OCI-LY7 (cell line): ENCODE measurements at regions of chr11 and their contacts with region 1.

Region 1: DNA sequence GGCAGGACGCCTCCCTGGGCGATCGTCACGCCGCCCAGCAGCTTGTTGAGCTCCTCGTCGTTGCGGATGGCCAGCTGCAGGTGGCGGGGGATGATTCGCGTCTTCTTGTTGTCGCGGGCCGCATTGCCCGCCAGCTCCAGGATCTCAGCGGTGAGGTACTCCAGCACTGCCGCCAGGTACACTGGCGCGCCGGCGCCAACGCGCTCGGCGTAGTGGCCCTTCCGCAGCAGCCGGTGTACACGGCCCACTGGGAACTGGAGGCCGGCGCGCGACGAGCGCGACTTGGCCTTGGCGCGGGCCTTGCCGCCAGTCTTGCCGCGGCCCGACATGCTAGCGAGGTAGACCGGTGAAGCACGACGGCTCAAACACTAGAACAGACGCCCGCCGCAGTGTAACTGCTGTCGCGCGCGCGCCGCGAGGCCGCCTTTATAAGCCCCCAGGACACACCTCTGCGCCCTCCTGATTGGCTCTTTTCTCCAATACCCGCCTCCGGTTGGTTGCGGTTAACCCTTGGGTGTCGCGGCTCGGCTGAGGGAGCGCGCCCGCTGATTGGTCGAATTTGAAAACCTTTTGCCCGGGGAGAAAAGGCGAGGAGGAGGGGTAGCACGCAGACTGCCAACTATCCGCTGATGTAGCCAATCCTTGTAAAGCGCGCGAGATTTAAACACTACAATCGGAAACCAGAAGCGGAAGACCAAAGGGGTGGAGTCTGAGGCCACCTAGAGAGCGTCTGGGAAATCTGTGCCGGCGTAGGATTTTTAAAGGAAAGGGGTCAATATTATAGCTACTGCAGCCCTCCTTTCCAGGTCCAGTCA is 6.4 kb downstream of the DPAGT1 start:
- DNase-seq: peak; percentile 99
- H3K4me3 ChIP-seq: peak overlapping the region; percentile 81
- H3K27ac ChIP-seq: peak overlapping the region; percentile 79
- H3K4me1 ChIP-seq: peaks cover 67% of the 10 kb centered on the region
- CTCF ChIP-seq: 0 out of 2 replicates have a peak, but pooled peaks have one; percentile 22

Region 2: DNA sequence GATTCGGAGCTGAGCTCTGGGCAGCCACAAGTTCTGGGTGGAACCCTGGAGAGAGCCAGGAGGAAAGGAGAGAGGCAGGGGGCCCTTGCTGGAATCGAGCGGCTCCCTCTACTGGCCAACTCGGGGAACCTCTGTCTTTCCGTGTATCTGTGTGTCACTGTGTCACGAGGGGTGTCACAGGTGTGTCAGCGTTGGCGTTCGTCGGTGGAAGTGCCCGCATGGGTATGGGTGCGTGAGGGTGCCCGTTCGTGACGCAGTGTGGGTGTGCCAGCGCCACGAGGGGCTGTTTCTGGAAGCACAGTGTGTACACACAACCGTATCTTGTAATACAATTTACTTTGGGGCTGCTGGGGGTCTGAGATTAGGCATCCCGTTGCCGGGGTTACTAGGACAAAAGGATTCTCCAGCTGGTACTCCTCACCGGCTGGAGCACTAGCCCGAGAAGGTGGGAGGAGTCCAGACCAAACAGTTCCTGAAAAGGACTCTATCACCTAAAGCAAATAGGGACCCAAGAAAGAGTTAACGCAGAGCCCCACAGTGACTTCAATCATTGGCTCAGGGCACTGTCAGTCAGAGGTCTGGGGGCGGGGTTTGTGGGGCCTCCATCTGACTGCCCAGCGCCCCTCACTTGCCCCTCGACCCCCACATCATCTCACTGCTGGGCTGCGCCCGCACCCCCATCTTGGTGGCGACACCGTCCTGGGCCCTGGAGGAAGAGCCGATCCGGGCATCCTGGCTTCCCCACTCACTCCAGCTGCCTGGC is 167.0 kb before region 1 on chr11:
- CTCF ChIA-PET with region 1: no interaction called
- POLR2A ChIA-PET with region 1: no interaction called
- intact Hi-C with region 1: loop called (anchors 2 kb)
- DNase-seq: peak; percentile 91
- H3K4me3 ChIP-seq: peak overlapping the region; percentile 71
- H3K27ac ChIP-seq: peak overlapping the region; percentile 76
- H3K4me1 ChIP-seq: peaks cover 44% of the 10 kb centered on the region
- CTCF ChIP-seq: peak; percentile 96

Region 3: GRCh38 chr11:119018074-119018938 is 77.0 kb before region 1 on chr11 and contains the starts of genes RPS25 and TRAPPC4:
- CTCF ChIA-PET with region 1: no interaction called
- POLR2A ChIA-PET with region 1: interaction called, 5 read pairs
- intact Hi-C with region 1: loop called (anchors 2 kb)
- DNase-seq: peak; percentile 97
- H3K4me3 ChIP-seq: peak within 1 kb of the TSS; percentile 81
- H3K27ac ChIP-seq: peak within 1 kb of the TSS; percentile 90
- H3K4me1 ChIP-seq: peaks cover 29% of the 10 kb centered on the region
- CTCF ChIP-seq: no peak
- total RNA-seq, gene RPS25: 1,395 and 1,541 TPM in 2 replicates
- total RNA-seq, gene TRAPPC4: 49.3 and 64.3 TPM in 2 replicates

Region 4: DNA sequence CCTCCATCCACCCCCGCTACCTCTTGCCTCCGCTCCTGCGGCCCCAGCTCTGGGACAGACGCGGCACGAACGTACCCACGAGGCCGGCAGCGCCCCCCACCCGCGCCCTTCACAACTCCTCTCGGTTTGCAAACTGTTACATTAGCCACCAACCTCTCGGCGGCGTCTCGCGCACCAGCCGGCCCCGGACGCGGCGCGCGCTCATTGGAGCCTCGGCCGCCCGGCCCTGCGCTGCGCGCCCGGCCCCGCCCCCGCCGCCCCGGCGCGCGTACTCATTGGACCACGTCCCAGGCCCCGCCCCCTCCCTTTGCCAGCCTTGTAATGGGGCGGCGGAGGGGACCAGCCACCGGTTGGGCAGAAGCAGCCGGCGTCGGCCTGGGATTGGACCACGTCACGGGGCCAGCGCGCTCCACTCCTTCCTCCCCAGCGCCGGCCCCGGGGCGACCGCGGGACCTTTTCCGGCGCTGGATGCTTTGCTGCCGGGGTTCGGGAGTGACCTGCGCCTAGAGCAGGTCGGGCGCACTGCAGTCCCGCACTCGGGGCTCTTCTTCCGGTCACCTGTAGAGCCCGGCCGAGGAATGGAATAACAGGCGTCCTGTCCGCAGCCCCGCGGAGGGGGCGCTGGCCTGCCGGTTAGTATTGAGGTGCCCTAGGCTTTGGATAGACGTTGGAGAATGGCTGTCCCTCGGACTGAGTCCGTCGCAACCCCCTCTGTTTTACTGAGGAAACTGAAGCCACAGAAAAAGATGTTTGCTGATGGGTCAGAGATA is 38.1 kb before region 1 on chr11 and contains the start of gene HYOU1:
- CTCF ChIA-PET with region 1: interaction called, 3 read pairs
- POLR2A ChIA-PET with region 1: interaction called, 6 read pairs
- intact Hi-C with region 1: loop called (anchors 1 kb)
- DNase-seq: peak; percentile 99
- H3K4me3 ChIP-seq: peak within 1 kb of the TSS; percentile 82
- H3K27ac ChIP-seq: peak within 1 kb of the TSS; percentile 65
- H3K4me1 ChIP-seq: peaks cover 13% of the 10 kb centered on the region
- CTCF ChIP-seq: peak; percentile 50; the same call in 1 of the 2 replicates
- total RNA-seq, gene HYOU1: 86.6 and 97.6 TPM in 2 replicates

Region 5: DNA sequence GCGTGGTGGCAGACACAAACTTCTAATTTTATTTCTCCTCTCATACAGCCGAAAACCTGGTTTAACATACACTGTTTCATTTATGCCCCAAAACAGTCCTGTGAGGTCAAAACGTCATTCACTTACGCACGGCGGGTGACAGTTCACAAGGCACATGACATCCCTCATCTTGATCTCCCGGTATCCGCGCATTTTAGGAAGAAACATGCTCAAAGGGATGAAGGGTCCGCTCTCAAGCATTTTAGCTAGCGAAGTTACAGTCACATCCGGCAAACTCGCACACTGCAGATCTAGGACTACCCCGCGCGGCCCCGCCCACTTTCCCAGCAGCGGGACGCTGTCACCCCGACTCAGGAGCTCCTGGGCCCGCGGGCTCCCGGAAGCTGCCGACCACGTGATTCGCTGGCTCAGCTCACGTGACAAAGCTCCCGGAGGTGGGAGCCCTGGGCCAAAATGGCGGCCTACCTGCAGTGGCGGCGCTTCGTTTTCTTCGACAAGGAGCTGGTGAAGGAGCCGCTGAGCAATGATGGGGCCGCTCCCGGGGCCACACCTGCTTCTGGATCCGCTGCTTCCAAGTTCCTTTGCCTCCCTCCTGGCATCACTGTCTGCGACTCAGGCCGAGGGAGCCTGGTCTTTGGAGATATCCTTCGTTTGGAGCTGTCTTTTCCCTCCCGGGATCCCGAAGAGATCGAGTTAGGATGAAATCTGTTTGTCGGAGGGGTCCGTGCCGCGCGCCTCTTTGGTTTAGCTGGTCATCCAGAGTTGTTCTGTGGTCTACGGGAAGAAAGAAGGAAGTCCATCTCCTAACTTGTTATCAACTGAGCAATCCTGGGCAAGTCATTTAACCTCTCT is 27.7 kb before region 1 on chr11 and contains the start of gene VPS11:
- CTCF ChIA-PET with region 1: no interaction called
- POLR2A ChIA-PET with region 1: interaction called, 6 read pairs
- intact Hi-C with region 1: loop called (anchors 1 kb)
- DNase-seq: peak; percentile 98
- H3K4me3 ChIP-seq: peak within 1 kb of the TSS; percentile 83
- H3K27ac ChIP-seq: peak within 1 kb of the TSS; percentile 75
- H3K4me1 ChIP-seq: peaks cover 23% of the 10 kb centered on the region
- CTCF ChIP-seq: no peak
- total RNA-seq, gene VPS11: 32.2 and 46.1 TPM in 2 replicates

Region 6: GRCh38 chr11:119084663-119085436 is 10.4 kb before region 1 on chr11 and contains the start of gene HMBS:
- CTCF ChIA-PET with region 1: interaction called, 3 read pairs
- POLR2A ChIA-PET with region 1: interaction called, 39 read pairs
- intact Hi-C with region 1: no loop called
- DNase-seq: peak; percentile 95
- H3K4me3 ChIP-seq: peak within 1 kb of the TSS; percentile 77
- H3K27ac ChIP-seq: peak within 1 kb of the TSS; percentile 66
- H3K4me1 ChIP-seq: peaks cover 29% of the 10 kb centered on the region
- CTCF ChIP-seq: no peak
- total RNA-seq, gene HMBS: 12.1 and 12.2 TPM in 2 replicates

Region 7: GRCh38 chr11:119196833-119197483 is 101.7 kb after region 1 on chr11:
- CTCF ChIA-PET with region 1: no interaction called
- POLR2A ChIA-PET with region 1: interaction called, 4 read pairs
- intact Hi-C with region 1: loop called (anchors 2 kb)
- DNase-seq: peak; percentile 89
- H3K4me3 ChIP-seq: no peak overlapping the region
- H3K27ac ChIP-seq: no peak overlapping the region
- H3K4me1 ChIP-seq: peaks cover 3% of the 10 kb centered on the region
- CTCF ChIP-seq: peak; percentile 96